Activated CD8-positive, alpha-beta T cell treated with anti-CD3 and anti-CD28 coated beads, Interleukin-2, amount 10 ng/mL, durations not matched to agents 7 days and 5 days (primary cell): ENCODE measurements at regions of chr9 and their contacts with region 1.

Region 1: DNA sequence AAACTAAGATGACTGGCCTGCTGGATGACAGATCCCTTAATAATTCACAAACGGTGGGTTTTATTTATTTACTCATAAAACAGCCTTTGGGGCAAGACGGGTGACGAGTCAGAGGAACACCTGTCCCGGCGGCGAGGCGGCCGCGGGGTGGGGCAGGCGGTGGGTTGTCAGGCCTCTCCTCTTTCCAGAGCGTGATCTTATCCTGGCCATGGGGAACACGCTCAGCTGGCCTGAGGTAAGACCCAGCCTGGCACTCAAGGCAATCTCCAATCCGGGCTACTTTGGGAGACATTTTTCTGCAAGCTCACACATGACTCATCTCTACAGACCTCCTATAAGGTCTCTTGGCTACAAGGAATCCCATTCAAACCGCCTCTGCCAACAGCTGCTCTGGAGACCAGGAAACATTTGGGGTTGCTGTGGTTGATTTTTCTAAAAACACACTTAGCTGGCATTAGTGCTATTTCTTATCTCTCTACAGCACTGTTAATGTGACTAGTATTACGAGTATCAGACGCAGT is 6.3 kb downstream of the RAPGEF1 start:
- DNase-seq: peak; percentile 47
- ATAC-seq: peak; percentile 14
- H3K4me3 Mint-ChIP-seq: peak overlapping the region; percentile 62
- H3K27ac Mint-ChIP-seq: peak overlapping the region; percentile 95
- H3K4me1 Mint-ChIP-seq: peaks cover 92% of the 10 kb centered on the region
- H3K27me3 Mint-ChIP-seq: no peaks in the 10 kb centered on the region

Region 2: DNA sequence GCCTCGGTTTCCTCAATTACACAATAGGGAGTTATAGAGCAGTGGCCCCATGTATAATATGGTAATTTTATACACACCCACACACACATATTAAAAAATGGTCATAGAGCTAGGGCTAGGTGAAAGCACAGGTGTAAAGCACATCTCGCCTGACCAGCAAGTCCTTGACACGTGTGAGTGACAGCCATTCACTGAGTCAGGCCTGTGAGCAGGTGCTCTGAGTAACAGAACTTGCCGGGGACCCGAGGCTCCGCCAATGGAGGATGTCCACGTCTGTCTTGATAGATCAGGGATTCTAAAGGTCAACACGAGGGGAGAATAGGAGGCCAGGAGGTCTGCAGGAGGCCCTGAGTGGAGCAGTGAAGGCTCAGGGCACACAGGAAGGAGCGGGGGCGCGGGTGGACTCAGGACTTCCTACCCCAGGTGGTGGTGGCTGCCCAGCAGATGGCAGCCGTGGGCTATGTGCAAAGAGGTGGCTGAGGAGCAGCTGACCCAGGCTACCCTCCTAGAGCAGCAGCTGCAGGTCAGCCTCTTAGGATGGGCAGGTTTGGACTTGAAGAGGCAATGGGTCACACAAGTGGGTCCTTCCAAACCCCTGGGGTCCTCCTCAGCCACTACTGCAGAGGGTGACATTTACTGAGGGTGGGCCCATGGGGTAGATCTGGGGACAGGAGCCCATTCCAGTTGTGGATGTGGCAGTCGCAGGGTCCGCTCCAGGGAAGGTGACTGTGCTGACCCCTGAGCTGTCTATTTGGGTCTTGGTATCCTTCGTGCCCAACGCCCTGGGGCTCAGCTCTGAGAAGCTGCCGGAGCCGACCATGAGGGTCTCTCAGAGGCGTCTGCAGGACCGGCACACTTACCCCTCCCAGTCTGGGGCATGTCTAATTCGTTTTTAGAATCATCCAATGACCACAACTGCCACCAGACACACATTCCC is 142.4 kb before region 1 on chr9:
- CTCF ChIA-PET with region 1: interaction called, 28 read pairs
- POLR2A ChIA-PET with region 1: interaction called, 3 read pairs
- DNase-seq: peak; percentile 83
- ATAC-seq: peak; percentile 86
- H3K4me3 Mint-ChIP-seq: peak overlapping the region; percentile 23
- H3K27ac Mint-ChIP-seq: peak overlapping the region; percentile 86
- H3K4me1 Mint-ChIP-seq: peaks cover 45% of the 10 kb centered on the region
- H3K27me3 Mint-ChIP-seq: no peaks in the 10 kb centered on the region

Region 3: GRCh38 chr9:131668439-131669268 is 64.9 kb before region 1 on chr9:
- CTCF ChIA-PET with region 1: interaction called, 100 read pairs
- POLR2A ChIA-PET with region 1: interaction called, 25 read pairs
- DNase-seq: peak; percentile 70
- ATAC-seq: peak; percentile 79
- H3K4me3 Mint-ChIP-seq: peak overlapping the region; percentile 67
- H3K27ac Mint-ChIP-seq: peak overlapping the region; percentile 97
- H3K4me1 Mint-ChIP-seq: peaks cover 75% of the 10 kb centered on the region
- H3K27me3 Mint-ChIP-seq: no peaks in the 10 kb centered on the region

Region 4: GRCh38 chr9:131678499-131679111 is 55.0 kb before region 1 on chr9:
- CTCF ChIA-PET with region 1: interaction called, 100 read pairs
- POLR2A ChIA-PET with region 1: interaction called, 44 read pairs
- DNase-seq: peak; percentile 84
- ATAC-seq: peak; percentile 97
- H3K4me3 Mint-ChIP-seq: peak overlapping the region; percentile 37
- H3K27ac Mint-ChIP-seq: peak overlapping the region; percentile 91
- H3K4me1 Mint-ChIP-seq: peaks cover 81% of the 10 kb centered on the region
- H3K27me3 Mint-ChIP-seq: no peaks in the 10 kb centered on the region

Region 5: DNA sequence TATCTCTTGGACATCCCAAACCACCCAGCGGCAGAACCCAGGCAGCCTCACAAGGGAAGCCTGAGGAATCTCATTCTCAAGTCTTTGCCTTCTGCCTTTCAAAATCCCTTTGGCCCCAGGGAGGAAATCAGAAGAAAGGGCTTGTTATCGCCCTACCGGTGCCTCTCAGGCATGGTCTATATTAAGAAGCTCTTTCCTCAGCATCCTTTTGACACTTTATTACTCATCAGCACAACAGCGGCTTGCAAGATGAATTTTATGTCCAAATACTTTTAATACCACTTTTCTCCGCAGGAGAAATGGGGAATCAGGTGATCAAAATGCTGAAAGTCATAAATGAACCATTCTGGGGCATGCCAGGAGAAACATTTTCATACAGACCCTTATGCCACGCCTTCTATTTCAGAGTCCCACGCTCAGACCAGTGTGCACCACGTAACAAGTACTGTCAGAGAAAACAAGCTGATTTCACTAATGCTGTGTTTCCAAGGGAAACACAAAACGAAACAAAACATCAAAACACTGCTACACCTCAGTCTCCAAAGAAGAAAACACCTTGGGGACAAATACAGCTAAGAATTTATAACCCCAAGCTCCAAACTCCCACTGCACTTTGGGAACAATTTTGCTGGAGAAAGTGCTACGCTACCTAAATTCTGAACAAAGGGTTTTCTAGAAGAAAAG is 23.7 kb before region 1 on chr9:
- CTCF ChIA-PET with region 1: interaction called, 26 read pairs
- POLR2A ChIA-PET with region 1: interaction called, 25 read pairs
- DNase-seq: no peak
- ATAC-seq: peak; percentile 80
- H3K4me3 Mint-ChIP-seq: peak overlapping the region; percentile 26
- H3K27ac Mint-ChIP-seq: peak overlapping the region; percentile 63
- H3K4me1 Mint-ChIP-seq: peaks cover 70% of the 10 kb centered on the region
- H3K27me3 Mint-ChIP-seq: no peaks in the 10 kb centered on the region

Region 6: GRCh38 chr9:131719262-131719908 is 14.2 kb before region 1 on chr9:
- CTCF ChIA-PET with region 1: interaction called, 5 read pairs
- POLR2A ChIA-PET with region 1: interaction called, 10 read pairs
- DNase-seq: no peak
- ATAC-seq: no peak
- H3K4me3 Mint-ChIP-seq: no peak overlapping the region
- H3K27ac Mint-ChIP-seq: no peak overlapping the region
- H3K4me1 Mint-ChIP-seq: peaks cover 55% of the 10 kb centered on the region
- H3K27me3 Mint-ChIP-seq: no peaks in the 10 kb centered on the region

Region 7: GRCh38 chr9:131747356-131747755 is 13.8 kb after region 1 on chr9:
- CTCF ChIA-PET with region 1: interaction called, 25 read pairs
- POLR2A ChIA-PET with region 1: interaction called, 13 read pairs
- DNase-seq: peak; percentile 61
- ATAC-seq: peak; percentile 50
- H3K4me3 Mint-ChIP-seq: no peak overlapping the region
- H3K27ac Mint-ChIP-seq: peak overlapping the region; percentile 17
- H3K4me1 Mint-ChIP-seq: peaks cover 36% of the 10 kb centered on the region
- H3K27me3 Mint-ChIP-seq: peaks cover 2% of the 10 kb centered on the region

Region 8: DNA sequence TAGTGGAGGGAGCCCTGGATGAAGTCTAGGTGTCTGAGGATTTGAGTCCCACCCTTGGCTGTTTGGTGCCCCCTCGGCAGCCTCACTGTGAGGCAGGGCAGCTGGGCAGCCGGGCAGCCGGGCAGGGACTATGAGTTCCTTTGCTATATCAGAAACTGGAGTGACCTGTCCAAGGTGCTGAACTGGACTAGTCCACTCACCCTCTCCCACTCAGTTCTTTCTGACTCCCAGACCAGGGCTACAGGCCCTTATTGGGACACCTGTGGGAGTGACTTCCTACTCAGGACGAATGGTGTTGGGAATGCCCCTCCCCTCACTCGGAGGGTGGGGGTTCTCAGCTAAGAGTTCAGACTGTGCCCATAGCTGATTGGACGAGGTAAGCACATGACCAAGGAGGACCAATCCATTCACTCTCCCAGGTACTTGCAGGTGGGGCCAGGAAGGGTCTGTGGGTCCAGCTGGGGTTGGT is 40.3 kb after region 1 on chr9:
- CTCF ChIA-PET with region 1: no interaction called
- POLR2A ChIA-PET with region 1: no interaction called
- DNase-seq: peak; percentile 73
- ATAC-seq: peak; percentile 58
- H3K4me3 Mint-ChIP-seq: no peak overlapping the region
- H3K27ac Mint-ChIP-seq: no peak overlapping the region
- H3K4me1 Mint-ChIP-seq: no peaks in the 10 kb centered on the region
- H3K27me3 Mint-ChIP-seq: peaks cover under 1% of the 10 kb centered on the region

Region 9: DNA sequence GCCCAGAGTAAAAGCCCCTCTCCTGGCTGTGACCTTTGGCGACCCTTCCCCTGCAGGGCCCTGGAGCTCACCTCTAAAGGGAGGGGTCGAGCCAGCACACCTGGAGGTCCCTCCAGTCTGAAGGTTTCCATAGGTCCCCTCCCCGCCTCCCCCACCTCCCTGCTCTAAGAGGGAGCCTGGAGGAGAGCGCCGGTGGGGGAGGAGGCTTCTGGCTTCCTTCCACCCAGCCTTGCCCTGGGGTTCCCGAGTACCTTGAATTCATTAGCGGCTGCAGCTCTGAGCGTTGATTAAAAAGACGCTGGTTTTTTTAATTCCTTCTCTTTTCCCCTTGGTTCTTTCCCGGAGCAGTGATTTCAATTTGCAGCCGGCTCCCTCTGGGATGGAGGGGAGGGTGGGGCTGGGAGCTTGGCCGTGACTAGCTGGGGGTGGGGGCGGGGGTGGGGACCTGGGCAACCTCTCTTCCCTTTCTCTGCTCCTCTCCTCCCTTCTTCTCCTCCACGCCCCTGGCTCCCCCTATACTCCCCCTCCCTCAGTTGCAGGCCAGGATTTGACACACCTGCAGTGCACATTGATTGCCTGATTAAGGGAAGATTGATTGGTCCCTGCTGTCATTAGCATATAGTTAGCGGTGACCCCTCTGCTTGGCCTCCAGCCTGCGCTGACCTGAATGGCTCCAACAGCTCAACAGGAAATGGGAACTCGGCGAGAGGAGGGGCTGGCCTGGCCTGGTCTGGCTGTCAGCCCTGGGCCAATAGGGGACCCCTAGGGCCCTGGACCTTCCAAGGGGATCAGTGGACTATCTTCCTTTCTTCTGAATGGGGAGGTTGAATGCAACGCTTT is 73.8 kb after region 1 on chr9:
- CTCF ChIA-PET with region 1: no interaction called
- POLR2A ChIA-PET with region 1: no interaction called
- DNase-seq: no peak
- ATAC-seq: no peak
- H3K4me3 Mint-ChIP-seq: no peak overlapping the region
- H3K27ac Mint-ChIP-seq: no peak overlapping the region
- H3K4me1 Mint-ChIP-seq: no peaks in the 10 kb centered on the region
- H3K27me3 Mint-ChIP-seq: peaks cover 6% of the 10 kb centered on the region